ENCODE measurements at regions of chr18 and their contacts with region 1.

Region 1: DNA sequence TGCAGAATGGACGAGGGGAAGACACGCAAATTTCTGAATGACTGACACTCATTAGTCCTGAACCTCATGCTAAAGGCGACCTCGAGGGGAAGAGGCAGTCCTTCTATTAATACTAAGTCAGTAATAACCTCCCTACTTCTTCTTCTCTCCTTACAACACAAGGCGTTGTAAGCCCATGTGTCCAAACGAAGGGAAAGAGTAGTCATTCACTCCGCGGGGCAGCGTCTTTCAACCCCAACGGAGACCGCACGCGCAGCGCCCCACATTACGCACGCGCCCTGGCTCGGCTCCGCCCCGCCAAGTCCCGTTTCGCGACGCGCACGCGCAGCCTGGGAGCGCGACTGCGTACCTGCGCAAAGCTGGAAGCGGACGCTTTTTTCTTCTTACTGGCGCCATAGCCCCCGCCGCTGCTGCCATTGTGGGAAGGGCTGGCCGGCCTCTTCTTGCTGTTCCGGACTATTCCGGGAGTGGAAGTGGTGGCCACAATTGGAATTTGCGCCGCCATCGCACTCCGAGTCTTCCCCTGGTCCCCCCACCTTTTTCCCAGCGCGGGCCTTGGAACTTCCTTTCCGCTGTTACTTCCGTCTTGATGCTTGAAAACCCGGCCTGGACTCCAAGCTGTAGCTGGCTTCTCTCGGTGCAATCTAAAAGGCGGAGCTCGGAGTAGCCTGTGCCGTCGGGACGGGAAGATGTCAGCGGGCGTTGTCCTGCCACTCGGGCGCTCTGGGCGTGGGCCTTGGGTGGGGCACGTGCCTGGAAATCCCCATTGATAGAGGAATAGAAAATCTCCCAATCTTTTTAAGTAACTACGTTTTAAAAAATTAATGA is at the start of gene INO80C:
- DNase-seq: peak; percentile 94
- ATAC-seq: peak; percentile 97
- H3K4me3 Mint-ChIP-seq: peak within 1 kb of the TSS; percentile 99
- H3K27ac Mint-ChIP-seq: peak within 1 kb of the TSS; percentile 100
- H3K4me1 Mint-ChIP-seq: peaks cover 29% of the 10 kb centered on the region
- H3K27me3 Mint-ChIP-seq: no peaks in the 10 kb centered on the region
- total RNA-seq, gene INO80C: 17.3 to 21.7 TPM

Region 2: DNA sequence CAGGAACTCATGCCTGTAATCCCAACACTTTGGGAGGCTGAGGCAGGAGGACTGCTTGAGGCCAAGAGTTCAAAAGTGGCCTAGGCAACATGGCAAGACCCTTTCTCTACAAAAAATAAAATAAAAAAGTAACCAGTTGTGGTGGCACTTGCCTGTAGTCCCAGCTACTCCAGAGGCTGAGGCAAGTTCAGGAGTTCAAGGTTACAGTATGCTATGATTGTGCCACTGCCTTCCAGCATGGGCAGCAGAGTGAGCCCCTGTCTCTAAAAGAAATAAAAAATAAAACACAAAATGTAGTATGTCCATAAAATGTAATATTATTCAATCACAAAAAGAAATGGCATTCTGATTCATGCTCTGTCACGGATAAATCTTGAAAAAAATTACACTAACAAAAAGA is 11.7 kb before region 1 on chr18:
- POLR2A ChIA-PET with region 1: interaction called, 11 read pairs
- DNase-seq: no peak
- ATAC-seq: no peak
- H3K4me3 Mint-ChIP-seq: no peak overlapping the region
- H3K27ac Mint-ChIP-seq: no peak overlapping the region
- H3K4me1 Mint-ChIP-seq: peaks cover 2% of the 10 kb centered on the region
- H3K27me3 Mint-ChIP-seq: no peaks in the 10 kb centered on the region

Region 3: GRCh38 chr18:35526476-35527120 is 29.0 kb after region 1 on chr18:
- POLR2A ChIA-PET with region 1: no interaction called
- DNase-seq: no peak
- ATAC-seq: no peak
- H3K4me3 Mint-ChIP-seq: no peak overlapping the region
- H3K27ac Mint-ChIP-seq: no peak overlapping the region
- H3K4me1 Mint-ChIP-seq: peaks cover 3% of the 10 kb centered on the region
- H3K27me3 Mint-ChIP-seq: peaks cover 27% of the 10 kb centered on the region

Region 4: DNA sequence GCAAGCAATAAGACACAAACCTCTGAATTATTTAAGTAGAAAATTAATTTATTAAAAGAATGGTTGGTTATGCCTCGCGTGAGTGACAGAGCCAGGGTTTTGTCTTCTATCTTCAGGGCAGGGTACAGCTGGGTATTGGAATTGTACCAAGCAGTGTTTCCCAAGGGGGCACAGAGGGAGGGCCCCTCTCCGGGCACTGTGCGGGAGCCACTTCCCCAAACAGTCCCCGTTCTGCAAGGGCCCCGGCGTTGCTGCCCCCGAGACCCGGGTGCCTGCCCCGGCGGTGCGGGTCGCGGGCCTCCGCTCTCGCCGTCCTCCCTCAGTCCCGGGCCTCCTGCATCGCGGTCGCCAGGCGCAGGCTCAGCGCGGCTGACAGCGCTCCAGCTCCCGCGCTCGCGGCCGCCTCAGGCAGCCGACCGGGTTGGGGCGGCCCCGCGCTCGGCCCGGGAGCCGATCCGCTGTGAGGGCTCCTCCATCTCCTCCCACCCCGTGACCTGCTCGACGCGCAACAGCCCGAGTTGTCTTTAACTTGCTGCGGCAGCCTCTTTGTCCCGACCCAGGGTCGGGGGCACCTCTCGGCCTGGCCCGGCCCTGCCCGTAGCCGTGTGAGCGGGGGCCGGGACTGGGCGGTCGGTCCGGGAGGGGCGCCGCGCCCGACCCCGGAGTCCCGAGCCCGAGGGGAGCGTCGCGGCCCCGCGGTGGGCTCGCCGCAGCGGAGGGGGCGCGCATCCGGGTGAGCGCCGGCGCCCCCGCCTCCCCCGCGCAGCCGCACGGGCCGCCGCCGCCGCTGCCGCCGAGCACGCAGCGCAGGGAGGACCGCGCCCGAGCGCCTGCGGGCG is 83.3 kb after region 1 on chr18:
- POLR2A ChIA-PET with region 1: interaction called, 12 read pairs
- DNase-seq: peak; percentile 75
- ATAC-seq: peak; percentile 61
- H3K4me3 Mint-ChIP-seq: peak overlapping the region; percentile 79
- H3K27ac Mint-ChIP-seq: peak overlapping the region; percentile 64
- H3K4me1 Mint-ChIP-seq: peaks cover 44% of the 10 kb centered on the region
- H3K27me3 Mint-ChIP-seq: peaks cover 3% of the 10 kb centered on the region